HEK293 (cell line): ENCODE measurements at regions of chr19 and their contacts with region 1.

Region 1: GRCh38 chr19:13718733-13719132 is 45.6 kb upstream of the MRI1 start:
- H3K4me3 ChIP-seq: no peak overlapping the region
- H3K27ac ChIP-seq: no peak overlapping the region
- H3K4me1 ChIP-seq: no peaks in the 10 kb centered on the region
- CTCF ChIP-seq: peak; percentile 73; the same call in 1 of the 2 replicates

Region 2: DNA sequence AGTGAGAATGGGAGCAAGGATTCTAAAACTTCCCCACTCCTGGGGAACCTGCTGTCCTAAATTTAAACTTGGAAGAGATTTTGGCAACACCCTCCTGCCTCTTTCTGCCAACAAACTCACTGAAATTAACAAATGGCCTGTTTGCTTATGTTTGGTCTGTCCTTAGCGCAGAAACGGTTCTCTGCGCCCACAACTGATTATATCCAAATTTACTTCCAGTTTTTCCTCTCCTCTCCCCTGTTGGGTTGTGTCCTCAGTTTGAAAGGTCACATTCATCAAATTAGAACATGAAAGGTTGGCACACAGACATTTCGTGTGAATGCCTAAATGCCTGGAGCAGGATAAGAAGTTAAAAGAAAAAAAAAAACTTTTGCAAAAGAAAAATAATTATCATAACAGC is 10.8 kb before region 1 on chr19:
- CTCF ChIA-PET with region 1: interaction called, 12 read pairs
- POLR2A ChIA-PET with region 1: no interaction called
- H3K4me3 ChIP-seq: no peak overlapping the region
- H3K27ac ChIP-seq: no peak overlapping the region
- H3K4me1 ChIP-seq: no peaks in the 10 kb centered on the region
- CTCF ChIP-seq: no peak

Region 3: GRCh38 chr19:13731147-13731964 is 12.6 kb after region 1 on chr19:
- CTCF ChIA-PET with region 1: interaction called, 12 read pairs
- POLR2A ChIA-PET with region 1: interaction called, 5 read pairs
- H3K4me3 ChIP-seq: peak overlapping the region; percentile 73
- H3K27ac ChIP-seq: peak overlapping the region; percentile 46
- H3K4me1 ChIP-seq: 0 out of 2 replicates have a peak, but pooled peaks cover 4% of the 10 kb centered on the region
- CTCF ChIP-seq: no peak